SK-N-SH (cell line): ENCODE measurements at regions of chr5 and their contacts with region 1.

Region 1: DNA sequence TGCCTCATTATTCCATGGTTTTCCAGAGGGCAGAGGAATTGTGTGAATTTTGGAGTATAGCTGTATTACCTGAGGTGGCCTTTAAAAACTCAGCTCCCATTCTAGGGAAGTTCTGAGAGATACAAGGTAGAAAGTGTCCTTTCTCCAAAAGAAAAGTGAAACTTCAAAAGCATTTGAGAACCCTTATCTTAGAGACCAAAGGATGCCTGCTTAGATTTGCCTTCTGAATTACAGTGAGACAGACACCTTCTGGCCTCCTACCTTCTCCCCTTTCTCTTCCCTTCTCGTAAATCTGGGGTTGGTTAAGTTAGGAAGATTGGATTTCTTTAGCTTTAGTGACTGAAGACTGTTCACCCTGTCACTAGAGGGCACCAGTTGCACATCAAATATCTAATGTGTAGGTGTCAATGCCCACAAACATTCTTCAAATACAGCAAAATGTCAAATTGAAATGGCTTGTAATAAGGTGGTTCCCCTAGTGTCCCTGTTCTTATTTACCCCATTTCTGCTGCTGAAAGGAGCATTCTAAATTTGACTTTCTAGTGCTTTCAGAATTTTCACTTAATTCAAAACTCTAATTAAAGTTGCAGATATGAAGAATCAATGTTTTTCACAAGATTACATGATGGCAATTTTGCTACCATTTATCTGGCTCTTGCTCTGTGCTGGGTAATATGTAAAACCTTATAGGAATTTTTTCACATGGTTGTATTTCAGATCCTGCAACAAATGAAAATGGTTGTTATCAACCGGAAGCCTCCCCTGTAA is 46.7 kb downstream of the PRRC1 start:
- DNase-seq: peak; percentile 48
- H3K4me3 ChIP-seq: no peak overlapping the region; a peak in 1 of 4 replicates
- H3K27ac ChIP-seq: no peak overlapping the region
- H3K4me1 ChIP-seq: no peaks in the 10 kb centered on the region
- H3K27me3 ChIP-seq: peaks cover 27% of the 10 kb centered on the region; the same call in 1 of the 2 replicates
- CTCF ChIP-seq: peak; percentile 74
- EP300 ChIP-seq: no peak
- RAD21 ChIP-seq: peak; percentile 81

Region 2: GRCh38 chr5:127549518-127549917 is 14.7 kb before region 1 on chr5:
- CTCF ChIA-PET with region 1: interaction called, 12 read pairs
- POLR2A ChIA-PET with region 1: no interaction called
- DNase-seq: peak; percentile 33
- H3K4me3 ChIP-seq: no peak overlapping the region
- H3K27ac ChIP-seq: no peak overlapping the region
- H3K4me1 ChIP-seq: peaks cover 0 to 3% of the 10 kb centered on the region in 2 experiments; a peak in 2 of 4 replicates
- H3K27me3 ChIP-seq: no peaks in the 10 kb centered on the region
- CTCF ChIP-seq: no peak
- EP300 ChIP-seq: no peak
- RAD21 ChIP-seq: no peak

Region 3: GRCh38 chr5:127602481-127602880 is 38.3 kb after region 1 on chr5:
- CTCF ChIA-PET with region 1: no interaction called
- POLR2A ChIA-PET with region 1: no interaction called
- DNase-seq: no peak
- H3K4me3 ChIP-seq: no peak overlapping the region
- H3K27ac ChIP-seq: no peak overlapping the region
- H3K4me1 ChIP-seq: no peaks in the 10 kb centered on the region
- H3K27me3 ChIP-seq: peaks cover 6% of the 10 kb centered on the region; the same call in 1 of the 2 replicates
- CTCF ChIP-seq: no peak
- EP300 ChIP-seq: no peak
- RAD21 ChIP-seq: no peak